ENCODE measurements at regions of chr17 and their contacts with region 1.

Region 1: GRCh38 chr17:58317421-58318064 is 11.1 kb downstream of the TSPOAP1 start:
- DNase-seq: peak in 13 of 14 experiments; percentile 59 to 91 (median 69)
- ATAC-seq: peak; percentile 96
- H3K4me3 ChIP-seq: no peak overlapping the region
- H3K4me3 Mint-ChIP-seq: no peak overlapping the region
- H3K27ac ChIP-seq: peak overlapping the region; percentile 35 to 38
- H3K27ac Mint-ChIP-seq: peak overlapping the region; percentile 62
- H3K4me1 ChIP-seq: peaks cover 17% of the 10 kb centered on the region
- H3K4me1 Mint-ChIP-seq: peaks cover 7% of the 10 kb centered on the region
- H3K27me3 ChIP-seq: no peaks in the 10 kb centered on the region
- H3K27me3 Mint-ChIP-seq: no peaks in the 10 kb centered on the region
- CTCF ChIP-seq: peak; percentile 79

Region 2: GRCh38 chr17:58329035-58329809 is 11.7 kb after region 1 on chr17:
- CTCF ChIA-PET with region 1: interaction called, 43 read pairs
- POLR2A ChIA-PET with region 1: interaction called, 1,359 read pairs
- intact Hi-C with region 1: loop called in 1 of 2 experiments (anchors 1 kb)
- DNase-seq: peak; percentile 47 to 87 (median 72)
- ATAC-seq: peak; percentile 39
- H3K4me3 ChIP-seq: peak overlapping the region; percentile 84
- H3K4me3 Mint-ChIP-seq: peak overlapping the region; percentile 90
- H3K27ac ChIP-seq: peak overlapping the region; percentile 84 to 87
- H3K27ac Mint-ChIP-seq: peak overlapping the region; percentile 84
- H3K4me1 ChIP-seq: peaks cover 62% of the 10 kb centered on the region
- H3K4me1 Mint-ChIP-seq: peaks cover 53% of the 10 kb centered on the region
- H3K27me3 ChIP-seq: no peaks in the 10 kb centered on the region
- H3K27me3 Mint-ChIP-seq: no peaks in the 10 kb centered on the region
- CTCF ChIP-seq: peak; percentile 83

Region 3: DNA sequence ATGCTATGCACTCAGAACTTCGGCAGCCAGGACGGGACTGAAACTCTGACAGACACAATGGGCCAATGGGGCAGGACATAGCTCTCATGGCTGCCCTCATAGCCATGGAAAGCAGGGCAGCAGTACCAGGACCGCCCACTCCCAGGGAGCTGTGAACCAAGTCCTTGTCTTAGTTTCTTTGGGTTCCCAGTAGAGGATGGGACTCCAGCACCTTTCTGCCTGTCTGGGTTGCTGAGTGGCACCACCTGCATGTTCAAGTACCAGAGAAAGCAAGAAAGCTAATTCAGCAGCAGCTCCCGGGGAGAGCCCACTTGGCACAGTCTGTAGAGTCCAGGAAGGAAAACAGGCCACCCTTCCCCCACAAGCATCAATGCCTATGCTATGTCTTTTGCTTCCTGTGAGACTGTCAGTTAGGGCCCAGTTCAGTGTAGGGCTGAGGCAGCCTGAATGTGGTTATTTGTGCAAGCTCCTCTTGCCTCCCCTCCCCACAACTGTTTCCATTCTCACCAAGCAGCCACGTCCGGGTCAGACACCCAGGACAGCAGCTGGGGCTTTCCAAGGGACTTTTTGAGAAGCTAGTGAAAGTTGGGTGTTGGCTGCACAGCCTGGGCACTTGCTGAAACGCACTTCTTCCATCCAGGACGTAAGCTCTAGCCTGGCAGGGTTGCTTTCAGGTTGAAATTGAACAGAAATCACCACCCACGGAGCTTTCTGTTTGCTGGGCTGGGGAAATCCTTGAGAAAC is 26.7 kb after region 1 on chr17:
- CTCF ChIA-PET with region 1: interaction called, 211 read pairs
- POLR2A ChIA-PET with region 1: interaction called, 1,359 read pairs
- intact Hi-C with region 1: loop called (anchors 1 kb)
- DNase-seq: peak in 13 of 14 experiments; percentile 56 to 97 (median 77)
- ATAC-seq: peak; percentile 71
- H3K4me3 ChIP-seq: peak overlapping the region; percentile 67
- H3K4me3 Mint-ChIP-seq: peak overlapping the region; percentile 84
- H3K27ac ChIP-seq: peak overlapping the region; percentile 97 to 98
- H3K27ac Mint-ChIP-seq: peak overlapping the region; percentile 84
- H3K4me1 ChIP-seq: peaks cover 86% of the 10 kb centered on the region
- H3K4me1 Mint-ChIP-seq: peaks cover 99% of the 10 kb centered on the region
- H3K27me3 ChIP-seq: no peaks in the 10 kb centered on the region
- H3K27me3 Mint-ChIP-seq: no peaks in the 10 kb centered on the region
- CTCF ChIP-seq: no peak

Region 4: DNA sequence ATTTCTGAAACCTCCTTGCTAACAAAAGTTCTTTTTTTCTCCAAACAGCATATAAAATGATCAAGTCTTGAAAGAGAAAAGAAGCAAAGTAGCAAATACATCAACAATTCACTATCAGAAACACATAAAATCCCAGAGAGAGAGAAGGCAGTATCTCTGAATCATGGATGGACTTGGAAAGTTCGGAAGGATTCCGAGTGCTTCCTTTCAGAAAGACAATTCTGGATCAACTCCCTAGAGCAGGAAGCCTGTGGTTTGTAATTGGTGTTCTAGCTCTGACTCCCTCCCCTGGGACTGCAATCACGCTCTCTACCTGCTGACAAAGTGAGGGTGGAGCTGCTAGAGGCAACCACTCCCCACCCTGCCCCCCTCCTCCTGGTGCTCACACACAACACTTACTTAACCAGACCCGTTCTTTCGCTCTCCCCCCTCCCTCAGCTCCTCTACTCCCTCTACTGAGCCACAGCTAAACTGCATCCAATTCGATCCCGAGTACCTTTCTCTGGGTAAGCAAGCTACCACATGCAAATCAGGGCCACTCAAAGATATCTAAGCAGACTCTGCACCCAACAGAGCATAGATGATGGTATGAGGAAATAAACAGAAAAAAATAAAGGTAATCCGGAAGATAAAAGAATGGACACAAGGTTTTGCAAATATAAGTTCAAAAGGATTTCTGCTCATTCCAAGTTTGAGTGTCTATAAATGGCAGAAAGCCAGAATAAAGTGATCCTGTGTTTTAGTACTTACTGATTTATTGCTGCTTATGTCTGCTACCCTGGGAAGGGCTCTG is 100.0 kb after region 1 on chr17 and contains the start of gene RNF43:
- CTCF ChIA-PET with region 1: interaction called, 39 read pairs
- POLR2A ChIA-PET with region 1: interaction called, 35 read pairs
- intact Hi-C with region 1: loop called (anchors 1 kb)
- DNase-seq: peak; percentile 75 to 96 (median 86)
- ATAC-seq: peak; percentile 100
- H3K4me3 ChIP-seq: no peak within 1 kb of the TSS
- H3K4me3 Mint-ChIP-seq: no peak within 1 kb of the TSS
- H3K27ac ChIP-seq: no peak within 1 kb of the TSS
- H3K27ac Mint-ChIP-seq: peak within 1 kb of the TSS; percentile 8
- H3K4me1 ChIP-seq: peaks cover 7% of the 10 kb centered on the region
- H3K4me1 Mint-ChIP-seq: peaks cover 15% of the 10 kb centered on the region
- H3K27me3 ChIP-seq: no peaks in the 10 kb centered on the region
- H3K27me3 Mint-ChIP-seq: no peaks in the 10 kb centered on the region
- CTCF ChIP-seq: peak; percentile 72
- total RNA-seq, gene RNF43: 0.69 to 1.9 TPM

Region 5: DNA sequence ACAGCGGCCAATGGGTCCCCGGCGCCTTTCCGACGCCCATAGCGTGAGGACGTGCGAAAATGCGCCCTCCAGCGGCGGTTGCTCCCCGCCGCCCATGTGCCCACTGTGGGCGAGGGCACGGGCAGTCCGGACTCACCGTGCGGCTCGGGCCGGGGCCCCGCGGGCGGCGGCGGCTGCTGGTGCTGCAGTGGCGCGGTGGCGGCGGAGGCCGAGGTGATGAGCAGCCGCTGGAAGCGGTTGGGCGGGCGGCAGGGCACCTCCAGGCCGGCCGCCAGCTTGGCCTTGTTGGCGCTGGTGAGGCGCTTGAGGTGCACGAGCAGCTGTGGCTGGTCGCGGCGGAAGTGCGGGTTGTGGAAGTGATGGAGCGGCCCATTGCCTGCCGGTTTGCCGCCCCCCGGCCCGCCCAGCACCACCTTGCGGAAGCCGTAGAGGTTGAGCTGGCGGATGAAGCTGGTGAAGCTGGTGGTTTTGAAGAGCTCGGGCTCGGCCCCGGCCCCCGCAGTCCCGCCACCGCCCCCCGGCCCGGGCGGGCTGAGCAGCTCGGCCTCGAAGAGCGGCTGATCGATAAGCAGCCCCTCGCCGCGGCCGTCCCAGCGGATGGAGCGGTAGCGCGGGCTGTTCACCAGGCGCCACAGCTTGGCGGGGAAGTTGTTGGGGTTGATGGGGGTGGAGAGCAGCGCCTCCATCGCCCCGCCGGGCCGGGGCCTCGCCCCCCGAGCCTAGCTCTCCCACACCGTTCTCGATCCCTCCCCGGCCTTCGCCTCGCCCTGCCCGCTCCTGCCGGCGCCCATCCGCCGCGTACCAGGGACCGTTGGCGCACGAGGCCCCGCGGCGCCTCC is 170.3 kb after region 1 on chr17 and contains the start of gene HSF5:
- CTCF ChIA-PET with region 1: interaction called, 16 read pairs
- POLR2A ChIA-PET with region 1: interaction called, 32 read pairs
- intact Hi-C with region 1: loop called (anchors 1 to 5 kb)
- DNase-seq: peak; percentile 52 to 88 (median 75)
- ATAC-seq: peak; percentile 93
- H3K4me3 ChIP-seq: peak within 1 kb of the TSS; percentile 52
- H3K4me3 Mint-ChIP-seq: peak within 1 kb of the TSS; percentile 62
- H3K27ac ChIP-seq: peak within 1 kb of the TSS in 1 of 2 donors; percentile 43
- H3K27ac Mint-ChIP-seq: peak within 1 kb of the TSS; percentile 39
- H3K4me1 ChIP-seq: peaks cover 13% of the 10 kb centered on the region
- H3K4me1 Mint-ChIP-seq: peaks cover 5% of the 10 kb centered on the region
- H3K27me3 ChIP-seq: no peaks in the 10 kb centered on the region
- H3K27me3 Mint-ChIP-seq: no peaks in the 10 kb centered on the region
- CTCF ChIP-seq: peak; percentile 68
- total RNA-seq, gene HSF5: 1.6 to 1.7 TPM

Region 6: DNA sequence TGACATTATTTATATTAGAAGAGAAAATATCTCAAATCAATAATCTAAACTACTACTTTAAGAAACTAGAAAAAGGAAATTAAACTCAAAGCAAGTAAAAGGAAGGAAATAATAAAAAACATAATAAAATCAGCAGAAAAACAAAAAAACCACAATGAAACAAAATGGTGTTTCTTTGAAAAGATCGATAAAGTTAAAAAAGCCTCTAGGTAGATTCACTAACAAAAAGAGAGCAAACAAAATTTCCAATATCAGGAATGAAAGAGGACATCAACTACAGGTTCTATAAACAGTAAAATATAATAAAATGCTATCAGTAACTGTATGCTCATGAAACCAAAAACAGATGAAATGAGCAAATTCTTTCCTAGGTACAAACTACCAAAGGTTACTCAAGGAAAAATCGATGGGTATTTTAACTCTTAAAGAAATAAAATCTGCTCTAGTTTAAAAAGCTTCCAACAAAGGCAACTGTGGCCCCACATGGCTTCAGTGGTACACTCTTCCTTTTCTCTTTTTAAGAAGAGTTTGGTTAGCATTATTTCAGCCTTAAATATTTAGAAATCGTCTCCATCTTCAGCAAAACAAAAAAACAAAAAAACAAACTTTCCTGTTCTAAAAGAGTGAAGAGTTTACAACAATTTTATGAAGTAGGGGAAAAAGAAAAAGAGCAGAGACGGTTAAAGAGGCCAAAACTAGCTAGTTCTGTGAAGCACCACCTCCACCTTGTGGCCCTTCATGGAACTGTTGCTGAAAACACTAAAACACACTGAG is 687.0 kb after region 1 on chr17:
- CTCF ChIA-PET with region 1: no interaction called
- POLR2A ChIA-PET with region 1: interaction called, 3 read pairs
- intact Hi-C with region 1: loop called (anchors 5 to 10 kb)
- DNase-seq: peak; percentile 49 to 84 (median 66)
- ATAC-seq: peak; percentile 57
- H3K4me3 ChIP-seq: no peak overlapping the region
- H3K4me3 Mint-ChIP-seq: peak overlapping the region; percentile 45
- H3K27ac ChIP-seq: no peak overlapping the region
- H3K27ac Mint-ChIP-seq: peak overlapping the region; percentile 81
- H3K4me1 ChIP-seq: peaks cover 9% of the 10 kb centered on the region
- H3K4me1 Mint-ChIP-seq: peaks cover 12% of the 10 kb centered on the region
- H3K27me3 ChIP-seq: no peaks in the 10 kb centered on the region
- H3K27me3 Mint-ChIP-seq: no peaks in the 10 kb centered on the region
- CTCF ChIP-seq: peak; percentile 95

Measured in CD4-positive, alpha-beta T cell (primary cell).